Heart left ventricle (tissue), 16 donors: ENCODE measurements at regions of chr17 and their contacts with region 1.

Region 1: GRCh38 chr17:78154903-78155811 is 9.0 kb downstream of the C17orf99 start:
- DNase-seq: no peak
- ATAC-seq: peak in 2 of 4 donors; percentile 42 to 71
- H3K4me3 ChIP-seq: no peak overlapping the region
- H3K27ac ChIP-seq: peak overlapping the region in 1 of 12 donors; percentile 73
- H3K4me1 ChIP-seq: peaks cover 0 to 13% (median 2%) of the 10 kb centered on the region in 12 donors
- H3K27me3 ChIP-seq: no peaks in the 10 kb centered on the region
- CTCF ChIP-seq: no peak
- POLR2A ChIP-seq: no peak

Region 2: DNA sequence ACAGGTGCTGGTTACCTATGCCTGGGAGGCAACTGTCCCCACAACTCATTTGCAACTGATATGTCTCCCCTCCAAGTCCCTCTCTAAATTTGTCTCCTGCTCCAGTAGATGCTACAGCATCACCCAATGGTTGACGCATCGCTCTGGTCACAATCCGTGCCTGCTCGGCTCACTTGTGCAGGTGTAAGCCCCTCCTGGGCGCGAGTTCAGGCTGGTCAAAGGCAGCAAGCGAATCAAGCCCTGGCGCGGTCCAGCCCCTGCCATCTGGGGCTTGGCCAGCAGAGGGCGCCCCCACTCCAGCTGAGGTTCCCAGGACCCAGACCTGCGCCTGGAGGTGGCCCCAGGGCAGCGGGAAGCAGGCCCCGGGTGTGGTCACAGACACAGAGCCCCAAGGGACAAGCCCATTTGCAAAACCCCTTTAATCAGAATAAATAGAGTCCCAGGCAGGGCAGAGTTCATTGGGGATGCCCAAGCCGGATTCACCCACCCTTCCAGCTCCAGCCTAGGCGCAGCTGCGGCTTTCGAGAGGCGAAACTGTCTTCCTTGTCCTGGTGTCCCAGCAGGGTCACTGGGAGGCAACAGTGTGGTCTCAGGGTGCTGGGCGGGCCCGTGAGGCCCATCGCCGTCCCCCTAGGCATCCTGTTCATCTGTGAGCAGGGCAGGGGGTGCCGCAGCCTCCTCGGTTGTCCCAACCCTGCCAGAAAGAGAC is 42.5 kb before region 1 on chr17:
- intact Hi-C with region 1: no loop called
- DNase-seq: peak; percentile 73 to 92 (median 81)
- ATAC-seq: peak; percentile 27 to 66 (median 62)
- H3K4me3 ChIP-seq: no peak overlapping the region
- H3K27ac ChIP-seq: peak overlapping the region in 7 of 12 donors; percentile 1 to 54 (median 31)
- H3K4me1 ChIP-seq: peaks cover 0 to 63% (median 28%) of the 10 kb centered on the region in 12 donors
- H3K27me3 ChIP-seq: no peaks in the 10 kb centered on the region
- CTCF ChIP-seq: peak; percentile 99 to 100 (median 99)
- POLR2A ChIP-seq: no peak

Region 3: GRCh38 chr17:78214706-78215061 is 59.5 kb after region 1 on chr17:
- intact Hi-C with region 1: loop called in 1 of 10 experiments (anchors 10 kb)
- DNase-seq: no peak
- ATAC-seq: no peak
- H3K4me3 ChIP-seq: peak overlapping the region in 6 of 12 donors; percentile 34 to 70 (median 52)
- H3K27ac ChIP-seq: no peak overlapping the region
- H3K4me1 ChIP-seq: peaks cover 0 to 12% (median 5%) of the 10 kb centered on the region in 12 donors
- H3K27me3 ChIP-seq: no peaks in the 10 kb centered on the region
- CTCF ChIP-seq: no peak
- POLR2A ChIP-seq: no peak